Psoas muscle (tissue), 8 donors: ENCODE measurements at regions of chr14 and their contacts with region 1.

Region 1: DNA sequence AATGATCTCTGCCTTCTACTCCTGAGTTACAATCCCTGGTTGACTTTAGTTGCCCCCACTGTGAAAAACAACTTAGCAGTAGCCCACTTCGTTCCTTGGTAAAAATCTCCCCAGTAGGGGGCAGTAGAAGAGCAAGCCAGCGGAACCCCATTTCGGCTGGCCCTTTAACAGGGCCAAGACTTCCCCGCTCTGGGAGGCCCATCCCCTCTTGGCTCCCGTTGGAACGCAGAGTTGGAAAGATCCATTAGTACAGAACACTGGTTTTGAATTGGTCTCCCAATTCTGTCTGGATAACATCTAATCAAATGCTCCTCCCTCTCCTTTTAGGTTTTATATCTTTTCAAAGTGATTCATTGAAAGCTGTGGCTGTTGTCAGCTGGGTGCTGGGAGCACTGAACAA is 1133.3 kb downstream of the BCL11B start:
- DNase-seq: no peak
- ATAC-seq: no peak
- H3K4me3 ChIP-seq: no peak overlapping the region
- H3K27ac ChIP-seq: no peak overlapping the region
- H3K4me1 ChIP-seq: no peaks in the 10 kb centered on the region
- H3K27me3 ChIP-seq: peaks cover 2 to 21% (median 3%) of the 10 kb centered on the region in 3 donors
- CTCF ChIP-seq: no peak

Region 2: GRCh38 chr14:97916669-97917568 is 221.7 kb before region 1 on chr14:
- intact Hi-C with region 1: no loop called
- DNase-seq: no peak
- ATAC-seq: no peak
- H3K4me3 ChIP-seq: no peak overlapping the region
- H3K27ac ChIP-seq: no peak overlapping the region
- H3K4me1 ChIP-seq: no peaks in the 10 kb centered on the region
- H3K27me3 ChIP-seq: no peaks in the 10 kb centered on the region
- CTCF ChIP-seq: no peak

Region 3: GRCh38 chr14:98252820-98253219 is 114.2 kb after region 1 on chr14:
- intact Hi-C with region 1: no loop called
- DNase-seq: no peak
- ATAC-seq: no peak
- H3K4me3 ChIP-seq: no peak overlapping the region
- H3K27ac ChIP-seq: no peak overlapping the region
- H3K4me1 ChIP-seq: no peaks in the 10 kb centered on the region
- H3K27me3 ChIP-seq: peaks cover 0 to 2% (median 0%) of the 10 kb centered on the region in 3 donors
- CTCF ChIP-seq: no peak

Region 4: GRCh38 chr14:99266181-99267178 is 1127.8 kb after region 1 on chr14:
- intact Hi-C with region 1: loop called in 1 of 2 experiments (anchors 10 kb)
- DNase-seq: peak; percentile 65 to 83
- ATAC-seq: peak; percentile 78 to 93 (median 79)
- H3K4me3 ChIP-seq: no peak overlapping the region
- H3K27ac ChIP-seq: no peak overlapping the region
- H3K4me1 ChIP-seq: peaks cover 9% of the 10 kb centered on the region
- H3K27me3 ChIP-seq: peaks cover 3 to 55% (median 22%) of the 10 kb centered on the region in 3 donors
- CTCF ChIP-seq: peak; percentile 99